Prostate gland (tissue), 2 donors: ENCODE measurements at regions of chr1 and their contacts with region 1.

Region 1: DNA sequence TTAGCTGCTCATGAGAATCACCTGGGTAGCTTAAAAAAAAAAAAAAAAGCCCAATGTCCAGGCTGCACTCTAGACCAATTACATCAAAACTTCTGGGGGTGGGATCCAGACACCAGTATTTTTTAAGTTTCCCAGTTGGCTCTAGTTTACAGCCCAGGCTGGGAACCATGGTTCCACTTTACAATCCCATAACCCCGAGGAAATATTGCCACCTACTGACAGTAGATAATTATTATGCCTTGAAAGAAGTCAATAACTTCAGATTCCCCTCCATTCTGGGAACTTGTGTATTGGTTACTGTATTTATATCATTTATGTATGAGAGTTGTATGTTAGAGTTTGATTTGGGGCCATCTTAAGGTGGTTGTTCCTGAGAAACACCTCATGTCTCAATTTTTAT is 100.2 kb downstream of the SPATA46 start:
- DNase-seq: peak; percentile 15
- H3K4me3 ChIP-seq: no peak overlapping the region
- H3K27ac ChIP-seq: no peak overlapping the region
- H3K4me1 ChIP-seq: no peaks in the 10 kb centered on the region
- H3K27me3 ChIP-seq: no peaks in the 10 kb centered on the region
- CTCF ChIP-seq: peak in 3 of 4 experiments; percentile 37 to 51 (median 50)
- POLR2A ChIP-seq: no peak

Region 2: DNA sequence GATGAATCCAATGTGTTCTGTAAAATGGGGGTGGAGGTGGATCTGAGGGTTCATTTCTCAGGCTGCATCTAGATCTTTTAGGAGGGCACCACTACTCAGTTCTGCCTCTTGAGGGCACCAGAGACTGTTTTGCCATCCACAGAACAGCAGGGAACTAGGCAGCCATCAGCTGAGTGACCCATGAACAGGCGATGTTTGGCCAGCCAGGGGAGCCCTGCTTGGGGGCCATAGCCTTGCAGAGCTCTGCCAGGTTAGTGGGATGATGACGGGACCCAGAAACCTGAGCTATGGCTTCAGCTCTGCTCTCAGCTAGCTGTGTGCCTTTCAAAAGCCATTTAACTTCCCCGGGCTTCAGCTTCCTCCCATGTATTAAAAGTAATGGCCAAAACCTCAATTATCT is 220.4 kb before region 1 on chr1:
- intact Hi-C with region 1: loop called (anchors 5 kb)
- DNase-seq: peak; percentile 66
- H3K4me3 ChIP-seq: no peak overlapping the region
- H3K27ac ChIP-seq: no peak overlapping the region
- H3K4me1 ChIP-seq: no peaks in the 10 kb centered on the region
- H3K27me3 ChIP-seq: no peaks in the 10 kb centered on the region
- CTCF ChIP-seq: peak; percentile 72 to 89 (median 84)
- POLR2A ChIP-seq: no peak

Region 3: GRCh38 chr1:162327144-162327793 is 50.8 kb after region 1 on chr1:
- intact Hi-C with region 1: no loop called
- DNase-seq: no peak
- H3K4me3 ChIP-seq: no peak overlapping the region
- H3K27ac ChIP-seq: no peak overlapping the region
- H3K4me1 ChIP-seq: no peaks in the 10 kb centered on the region
- H3K27me3 ChIP-seq: no peaks in the 10 kb centered on the region
- CTCF ChIP-seq: no peak
- POLR2A ChIP-seq: no peak